Activated CD8-positive, alpha-beta T cell treated with anti-CD3 and anti-CD28 coated beads, Interleukin-2, amount 10 ng/mL, durations not matched to agents 7 days and 5 days (primary cell): ENCODE measurements at regions of chr9 and their contacts with region 1.

Region 1: GRCh38 chr9:4339357-4339756 is 39.5 kb upstream of the GLIS3 start:
- DNase-seq: peak; percentile 86
- ATAC-seq: peak; percentile 85
- H3K4me3 Mint-ChIP-seq: peak overlapping the region; percentile 30
- H3K27ac Mint-ChIP-seq: peak overlapping the region; percentile 55
- H3K4me1 Mint-ChIP-seq: peaks cover 3% of the 10 kb centered on the region
- H3K27me3 Mint-ChIP-seq: no peaks in the 10 kb centered on the region

Region 2: DNA sequence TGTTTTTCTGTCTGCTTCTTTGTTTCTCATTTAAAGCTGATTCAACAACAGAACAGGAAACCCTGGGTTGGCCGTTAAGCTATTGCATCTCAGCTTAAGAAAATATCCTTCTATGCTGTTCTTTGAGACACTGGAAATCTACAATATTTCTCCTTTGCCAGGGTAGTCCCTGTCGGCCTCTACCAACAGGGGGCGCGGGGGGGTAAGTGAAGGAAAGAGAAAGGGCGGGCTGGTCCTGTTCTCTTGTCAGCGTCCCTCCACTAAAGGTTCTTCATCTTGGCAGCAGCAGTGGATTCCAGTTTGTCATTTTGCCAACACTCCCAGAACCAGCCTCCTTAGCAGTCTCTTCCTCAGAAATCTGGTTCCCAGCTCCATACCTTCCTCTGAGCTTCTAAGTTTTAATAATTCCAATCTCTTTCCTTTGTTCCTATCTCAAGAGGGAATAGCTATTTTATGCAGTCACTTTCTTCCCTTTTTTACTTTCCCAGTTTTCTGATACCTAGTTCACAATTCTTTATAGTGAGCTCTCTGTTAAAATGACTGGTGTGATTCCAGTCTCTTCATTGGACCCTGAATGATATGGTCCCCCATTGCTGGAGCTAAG is 261.8 kb before region 1 on chr9:
- CTCF ChIA-PET with region 1: interaction called, 12 read pairs
- POLR2A ChIA-PET with region 1: no interaction called
- DNase-seq: peak; percentile 65
- ATAC-seq: peak; percentile 44
- H3K4me3 Mint-ChIP-seq: no peak overlapping the region
- H3K27ac Mint-ChIP-seq: no peak overlapping the region
- H3K4me1 Mint-ChIP-seq: no peaks in the 10 kb centered on the region
- H3K27me3 Mint-ChIP-seq: no peaks in the 10 kb centered on the region

Region 3: GRCh38 chr9:4289411-4290380 is 49.7 kb before region 1 on chr9:
- CTCF ChIA-PET with region 1: no interaction called
- POLR2A ChIA-PET with region 1: no interaction called
- DNase-seq: no peak
- ATAC-seq: no peak
- H3K4me3 Mint-ChIP-seq: no peak overlapping the region
- H3K27ac Mint-ChIP-seq: no peak overlapping the region
- H3K4me1 Mint-ChIP-seq: no peaks in the 10 kb centered on the region
- H3K27me3 Mint-ChIP-seq: peaks cover 17% of the 10 kb centered on the region

Region 4: DNA sequence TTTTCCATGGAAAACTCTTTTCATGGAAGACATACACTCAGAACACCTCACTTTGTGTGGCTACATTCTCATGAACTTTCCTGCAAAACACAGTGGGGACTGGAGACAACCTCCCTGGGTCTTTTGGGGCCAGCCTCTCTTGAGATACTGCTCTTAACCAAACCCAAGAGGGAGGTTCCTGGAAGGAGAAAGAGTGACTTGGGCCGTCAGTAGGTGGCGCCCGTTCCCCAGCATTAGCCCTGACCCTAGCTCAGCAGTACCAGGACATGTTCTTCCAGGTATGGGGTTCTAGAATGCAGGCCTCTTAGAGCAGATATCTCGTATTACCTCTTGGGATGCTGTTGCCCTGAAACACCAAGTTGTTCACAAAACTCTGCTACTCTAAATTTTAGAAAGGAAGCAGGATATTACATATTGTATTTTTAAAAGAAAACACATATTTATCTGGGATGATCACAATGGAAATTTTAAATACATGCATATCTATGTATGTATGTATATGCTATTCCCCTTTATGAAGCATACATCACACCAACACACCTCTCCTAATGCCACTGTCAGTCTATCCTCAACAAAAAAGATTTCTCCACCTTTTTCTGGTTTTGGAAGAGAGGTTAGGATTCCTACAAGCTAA is 23.7 kb before region 1 on chr9:
- CTCF ChIA-PET with region 1: interaction called, 90 read pairs
- POLR2A ChIA-PET with region 1: no interaction called
- DNase-seq: peak; percentile 79
- ATAC-seq: peak; percentile 98
- H3K4me3 Mint-ChIP-seq: no peak overlapping the region
- H3K27ac Mint-ChIP-seq: no peak overlapping the region
- H3K4me1 Mint-ChIP-seq: peaks cover 2% of the 10 kb centered on the region
- H3K27me3 Mint-ChIP-seq: peaks cover 6% of the 10 kb centered on the region

Region 5: DNA sequence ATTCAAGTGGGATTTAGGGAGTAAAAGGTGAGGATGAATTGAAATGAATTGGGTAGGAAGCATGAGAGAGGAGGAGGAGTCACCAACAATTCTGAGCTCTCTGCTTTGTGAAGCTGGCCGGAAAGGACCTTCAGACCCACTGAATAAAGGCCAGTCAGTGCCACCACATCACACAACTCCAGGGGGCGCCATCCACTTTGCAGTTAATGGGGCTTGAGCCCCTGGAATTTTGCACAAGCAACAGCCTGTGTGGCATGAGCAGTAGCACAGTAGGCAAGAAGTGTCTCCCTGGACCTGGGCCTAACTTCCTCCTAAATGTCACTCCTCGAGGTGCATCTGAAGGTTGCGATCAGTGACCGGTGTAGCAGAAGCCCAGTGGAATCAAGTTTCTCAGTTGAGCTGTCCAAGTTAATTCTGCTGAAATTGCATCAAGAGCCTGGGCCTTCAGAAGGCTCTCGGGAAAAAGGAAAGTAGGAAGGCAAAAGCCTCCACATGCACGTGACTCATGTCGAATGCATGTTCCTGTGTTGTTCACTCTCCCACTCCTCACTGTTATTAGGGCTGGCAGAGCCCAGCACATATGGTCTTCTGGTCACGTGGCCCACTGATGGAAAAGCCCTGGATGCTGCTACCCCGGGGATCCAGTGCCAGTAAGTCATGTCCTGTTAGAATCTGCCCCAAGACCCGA is 11.7 kb before region 1 on chr9:
- CTCF ChIA-PET with region 1: interaction called, 20 read pairs
- POLR2A ChIA-PET with region 1: no interaction called
- DNase-seq: no peak
- ATAC-seq: no peak
- H3K4me3 Mint-ChIP-seq: no peak overlapping the region
- H3K27ac Mint-ChIP-seq: no peak overlapping the region
- H3K4me1 Mint-ChIP-seq: peaks cover 3% of the 10 kb centered on the region
- H3K27me3 Mint-ChIP-seq: no peaks in the 10 kb centered on the region

Region 6: DNA sequence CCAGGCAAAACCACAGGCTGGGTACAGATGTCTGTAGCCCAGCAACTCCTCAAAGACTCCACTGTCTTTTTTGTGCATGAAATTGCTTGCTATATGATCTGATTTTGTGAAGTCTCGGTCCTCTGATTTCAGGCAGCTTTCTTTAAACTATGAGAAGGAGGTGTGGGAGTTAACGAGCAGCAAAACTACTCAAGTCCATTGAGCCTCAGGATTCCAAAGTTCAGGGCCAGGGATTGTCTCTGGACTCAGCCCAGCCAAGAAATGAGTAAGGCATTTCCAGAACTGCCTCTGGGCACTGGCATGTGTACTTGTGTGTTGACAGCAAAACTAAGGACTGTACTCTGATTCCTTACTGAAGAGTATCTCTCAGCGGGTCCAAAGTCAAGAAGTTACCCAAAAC is 13.9 kb after region 1 on chr9:
- CTCF ChIA-PET with region 1: interaction called, 12 read pairs
- POLR2A ChIA-PET with region 1: no interaction called
- DNase-seq: no peak
- ATAC-seq: no peak
- H3K4me3 Mint-ChIP-seq: no peak overlapping the region
- H3K27ac Mint-ChIP-seq: no peak overlapping the region
- H3K4me1 Mint-ChIP-seq: no peaks in the 10 kb centered on the region
- H3K27me3 Mint-ChIP-seq: peaks cover 7% of the 10 kb centered on the region

Region 7: GRCh38 chr9:4366591-4367330 is 27.4 kb after region 1 on chr9:
- CTCF ChIA-PET with region 1: interaction called, 25 read pairs
- POLR2A ChIA-PET with region 1: no interaction called
- DNase-seq: peak; percentile 36
- ATAC-seq: no peak
- H3K4me3 Mint-ChIP-seq: no peak overlapping the region
- H3K27ac Mint-ChIP-seq: no peak overlapping the region
- H3K4me1 Mint-ChIP-seq: no peaks in the 10 kb centered on the region
- H3K27me3 Mint-ChIP-seq: peaks cover under 1% of the 10 kb centered on the region